ENCODE measurements at regions of chr2 and their contacts with region 1.

Region 1: GRCh38 chr2:65129826-65130663 is at the start of gene RAB1A:
- DNase-seq: peak; percentile 99
- H3K4me3 Mint-ChIP-seq: peak within 1 kb of the TSS; percentile 99
- H3K27ac Mint-ChIP-seq: peak within 1 kb of the TSS; percentile 98
- H3K4me1 Mint-ChIP-seq: peaks cover 39% of the 10 kb centered on the region
- H3K27me3 Mint-ChIP-seq: peaks cover 9% of the 10 kb centered on the region
- total RNA-seq, gene RAB1A: 74.0 to 74.9 TPM

Region 2: DNA sequence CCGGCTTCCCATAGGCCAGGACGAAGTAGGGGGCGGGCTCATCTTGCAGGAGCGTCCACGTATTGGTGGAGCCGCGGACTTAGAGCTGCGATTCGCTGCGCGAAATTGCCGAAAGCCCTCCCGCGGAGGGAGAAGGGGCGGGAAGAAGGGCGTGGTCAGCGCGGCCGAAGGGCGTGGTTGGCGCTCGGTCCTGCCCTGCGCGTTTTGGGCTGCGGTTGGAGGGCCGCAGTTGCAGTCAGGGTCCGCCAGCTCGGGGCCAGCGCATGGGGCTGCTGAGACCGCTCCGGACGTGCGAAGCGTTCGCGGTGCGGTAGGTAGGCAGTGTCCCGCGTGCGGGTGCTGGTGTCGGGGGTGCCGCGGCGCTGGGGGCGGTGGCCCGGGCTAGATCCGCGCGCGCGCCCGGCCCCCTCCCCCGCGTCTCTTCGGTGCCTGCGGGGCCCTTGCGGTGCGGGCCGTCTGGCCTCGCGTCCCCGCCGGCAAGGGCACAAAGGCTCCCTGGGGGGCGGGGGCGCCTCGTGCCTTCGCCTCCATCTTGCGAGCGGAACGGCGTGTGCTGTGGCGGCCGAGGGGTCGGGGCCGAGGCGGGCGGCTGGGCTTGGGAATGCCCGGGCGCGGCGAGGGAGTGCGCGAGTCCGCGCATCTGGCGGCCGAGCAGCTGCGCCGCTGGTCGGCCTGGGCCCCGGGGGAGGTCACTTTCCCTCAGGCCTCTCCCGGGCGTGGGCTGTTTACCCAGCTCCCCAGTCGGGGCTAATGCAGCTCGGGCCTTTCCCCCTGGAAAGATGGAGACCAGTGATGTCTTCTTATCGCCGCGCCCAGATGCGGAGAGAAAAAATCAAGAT is 73.6 kb before region 1 on chr2 and contains the start of gene CEP68:
- CTCF ChIA-PET with region 1: interaction called, 12 read pairs
- POLR2A ChIA-PET with region 1: interaction called, 53 read pairs
- DNase-seq: peak; percentile 98
- H3K4me3 Mint-ChIP-seq: peak within 1 kb of the TSS; percentile 94
- H3K27ac Mint-ChIP-seq: peak within 1 kb of the TSS; percentile 77
- H3K4me1 Mint-ChIP-seq: peaks cover 59% of the 10 kb centered on the region
- H3K27me3 Mint-ChIP-seq: peaks cover under 1% of the 10 kb centered on the region
- total RNA-seq, gene CEP68: 12.8 to 13.3 TPM

Region 3: GRCh38 chr2:65116645-65117044 is 13.4 kb before region 1 on chr2:
- CTCF ChIA-PET with region 1: interaction called, 7 read pairs
- POLR2A ChIA-PET with region 1: interaction called, 21 read pairs
- DNase-seq: no peak
- H3K4me3 Mint-ChIP-seq: no peak overlapping the region
- H3K27ac Mint-ChIP-seq: no peak overlapping the region
- H3K4me1 Mint-ChIP-seq: peaks cover 35% of the 10 kb centered on the region
- H3K27me3 Mint-ChIP-seq: no peaks in the 10 kb centered on the region

Region 4: DNA sequence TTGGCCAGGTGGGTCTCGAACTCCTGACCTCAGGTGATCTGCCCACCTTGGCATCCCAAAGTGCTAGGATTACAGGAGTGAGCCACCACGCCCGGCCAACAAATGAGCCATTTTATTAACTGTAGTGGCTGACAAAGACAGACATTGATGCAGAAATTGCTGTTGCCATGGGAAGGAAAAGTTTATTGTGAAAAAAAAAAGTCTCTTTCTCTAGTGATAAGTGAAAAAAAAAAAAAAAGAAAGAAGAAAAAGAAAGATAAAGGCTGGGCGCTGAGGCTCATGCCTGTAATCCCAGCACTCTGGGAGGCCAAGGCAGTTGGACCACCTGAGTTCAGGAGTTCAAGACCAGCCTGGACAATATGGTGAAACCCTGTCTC is 39.7 kb after region 1 on chr2:
- CTCF ChIA-PET with region 1: interaction called, 11 read pairs
- POLR2A ChIA-PET with region 1: interaction called, 4 read pairs
- DNase-seq: no peak
- H3K4me3 Mint-ChIP-seq: no peak overlapping the region
- H3K27ac Mint-ChIP-seq: no peak overlapping the region
- H3K4me1 Mint-ChIP-seq: no peaks in the 10 kb centered on the region
- H3K27me3 Mint-ChIP-seq: peaks cover 2% of the 10 kb centered on the region

Region 5: DNA sequence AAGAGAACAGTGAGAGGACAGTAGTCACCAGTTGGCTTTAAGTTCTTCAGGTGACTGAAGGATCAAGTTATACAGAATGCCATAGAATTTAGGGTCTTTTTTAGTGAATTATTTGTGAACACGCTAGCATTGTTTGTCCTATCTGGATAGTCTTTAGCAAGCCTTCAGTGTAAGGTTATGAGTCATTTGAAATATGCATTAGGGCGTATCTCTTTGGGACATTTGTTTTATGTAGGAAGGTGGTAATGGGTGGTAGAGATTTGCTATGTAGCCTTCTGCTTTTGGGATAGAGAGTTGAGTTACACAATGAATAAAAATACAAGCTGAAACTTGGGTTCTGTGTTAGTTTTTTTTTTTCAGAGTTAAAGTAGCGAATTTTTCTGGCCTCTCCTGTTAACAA is 110.6 kb after region 1 on chr2:
- CTCF ChIA-PET with region 1: no interaction called
- POLR2A ChIA-PET with region 1: no interaction called
- DNase-seq: no peak
- H3K4me3 Mint-ChIP-seq: no peak overlapping the region
- H3K27ac Mint-ChIP-seq: peak overlapping the region; percentile 1
- H3K4me1 Mint-ChIP-seq: peaks cover 20% of the 10 kb centered on the region
- H3K27me3 Mint-ChIP-seq: no peaks in the 10 kb centered on the region

Measured in activated CD4-positive, alpha-beta memory T cell treated with anti-CD3 and anti-CD28 coated beads, Interleukin-2, amount 10 ng/mL, durations not matched to agents 7 days and 5 days (primary cell).